Mammary epithelial cell (primary cell): ENCODE measurements at regions of chr1 and their contacts with region 1.

Region 1: DNA sequence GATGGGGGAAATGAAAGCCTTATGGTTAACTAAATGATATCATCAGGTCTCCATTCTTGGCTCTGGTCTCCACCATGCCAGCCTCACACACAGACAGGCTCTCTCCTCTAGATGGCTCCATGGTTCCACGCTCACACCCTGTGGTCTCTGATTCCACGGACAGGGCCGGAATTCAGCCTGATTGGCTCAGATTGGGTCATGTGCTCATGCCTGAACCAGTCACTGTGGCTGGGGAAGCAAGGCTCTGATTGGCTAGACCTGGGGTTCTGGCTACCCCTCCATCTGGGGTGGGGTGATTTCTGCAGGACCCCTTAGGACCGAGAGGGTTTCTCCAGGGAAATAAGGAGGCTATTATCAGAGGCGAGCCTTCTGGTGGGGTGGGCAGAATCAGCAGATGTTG is 277.0 kb downstream of the PTPRU start:
- DNase-seq: peak; percentile 67
- H3K4me3 ChIP-seq: no peak overlapping the region
- H3K27ac ChIP-seq: no peak overlapping the region
- H3K4me1 ChIP-seq: no peaks in the 10 kb centered on the region
- H3K27me3 ChIP-seq: no peaks in the 10 kb centered on the region
- CTCF ChIP-seq: peak; percentile 94 to 96

Region 2: DNA sequence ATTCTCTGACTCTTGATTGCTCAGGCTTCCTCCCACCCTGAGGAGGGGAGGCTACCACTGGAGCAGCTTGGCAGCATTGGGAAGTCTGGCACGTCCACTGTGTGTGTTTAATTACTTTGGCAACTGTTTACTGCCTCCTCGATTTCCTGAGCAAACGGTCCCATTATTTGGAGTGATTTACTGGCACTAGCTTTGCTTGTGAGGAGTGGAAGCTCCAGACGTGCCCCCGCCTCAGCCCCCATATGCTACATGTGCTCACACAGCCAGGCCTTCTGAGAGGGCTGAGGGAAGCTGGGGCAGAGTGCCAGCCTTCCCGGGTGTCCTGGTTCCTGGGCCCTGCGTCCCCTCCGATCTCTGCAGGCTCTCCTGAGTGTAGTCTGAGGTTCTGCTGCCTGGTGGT is 29.2 kb after region 1 on chr1:
- CTCF ChIA-PET with region 1: no interaction called
- dilution Hi-C with region 1: no loop called
- in situ Hi-C with region 1: no loop called
- intact Hi-C with region 1: no loop called
- DNase-seq: no peak
- H3K4me3 ChIP-seq: no peak overlapping the region
- H3K27ac ChIP-seq: no peak overlapping the region
- H3K4me1 ChIP-seq: no peaks in the 10 kb centered on the region
- H3K27me3 ChIP-seq: no peaks in the 10 kb centered on the region
- CTCF ChIP-seq: no peak

Region 3: DNA sequence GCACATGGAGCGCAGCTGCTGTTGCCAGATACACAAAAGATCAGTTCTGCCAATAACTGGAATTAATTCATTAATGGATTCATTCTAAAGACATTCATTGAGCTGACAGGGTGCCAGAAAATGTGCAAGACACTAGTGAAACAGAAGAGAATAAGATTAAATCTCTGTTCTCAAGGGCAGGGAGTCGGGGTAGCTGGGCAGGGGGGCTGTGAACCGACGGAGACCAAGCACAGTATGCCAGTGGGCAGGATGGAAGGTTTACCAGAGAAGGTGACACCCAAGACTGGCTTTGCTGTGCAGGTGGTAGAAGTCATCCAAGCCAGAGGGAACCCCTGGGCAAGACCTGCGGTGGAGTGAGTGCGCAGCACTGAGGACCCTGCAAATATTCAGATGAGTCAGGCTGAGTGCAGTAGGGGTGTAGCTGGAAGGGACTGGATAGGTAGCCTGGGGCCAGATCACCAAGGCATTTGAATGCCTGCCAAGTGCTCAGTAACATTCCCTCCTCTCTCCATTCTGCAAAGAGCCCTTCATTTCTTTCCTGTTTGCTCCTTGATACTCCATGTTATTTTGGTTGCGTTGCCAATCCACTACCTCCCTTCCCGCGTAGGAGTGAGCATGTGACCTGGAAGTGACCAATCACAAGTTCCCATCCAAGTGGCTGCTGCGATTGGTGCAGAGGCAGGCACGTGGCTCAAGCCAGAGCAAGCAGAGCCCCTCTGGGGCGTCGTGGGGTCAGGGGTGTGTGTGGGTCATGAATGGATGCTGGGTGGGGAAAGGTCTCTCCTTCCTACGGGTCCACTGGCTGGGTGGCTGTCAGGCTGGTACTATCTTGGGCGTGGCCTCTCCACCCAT is 136.1 kb after region 1 on chr1:
- CTCF ChIA-PET with region 1: no interaction called
- dilution Hi-C with region 1: no loop called
- in situ Hi-C with region 1: no loop called
- intact Hi-C with region 1: loop called (anchors 5 kb)
- DNase-seq: peak; percentile 71
- H3K4me3 ChIP-seq: no peak overlapping the region
- H3K27ac ChIP-seq: peak overlapping the region; percentile 11
- H3K4me1 ChIP-seq: peaks cover 30% of the 10 kb centered on the region
- H3K27me3 ChIP-seq: no peaks in the 10 kb centered on the region
- CTCF ChIP-seq: no peak

Region 4: GRCh38 chr1:29703596-29704370 is 190.4 kb after region 1 on chr1:
- CTCF ChIA-PET with region 1: no interaction called
- dilution Hi-C with region 1: no loop called
- in situ Hi-C with region 1: loop called in 1 of 2 experiments (anchors 10 kb)
- intact Hi-C with region 1: loop called (anchors 1 kb)
- DNase-seq: peak; percentile 45
- H3K4me3 ChIP-seq: no peak overlapping the region
- H3K27ac ChIP-seq: no peak overlapping the region
- H3K4me1 ChIP-seq: peaks cover 16% of the 10 kb centered on the region
- H3K27me3 ChIP-seq: no peaks in the 10 kb centered on the region
- CTCF ChIP-seq: peak; percentile 91 to 95

Region 5: DNA sequence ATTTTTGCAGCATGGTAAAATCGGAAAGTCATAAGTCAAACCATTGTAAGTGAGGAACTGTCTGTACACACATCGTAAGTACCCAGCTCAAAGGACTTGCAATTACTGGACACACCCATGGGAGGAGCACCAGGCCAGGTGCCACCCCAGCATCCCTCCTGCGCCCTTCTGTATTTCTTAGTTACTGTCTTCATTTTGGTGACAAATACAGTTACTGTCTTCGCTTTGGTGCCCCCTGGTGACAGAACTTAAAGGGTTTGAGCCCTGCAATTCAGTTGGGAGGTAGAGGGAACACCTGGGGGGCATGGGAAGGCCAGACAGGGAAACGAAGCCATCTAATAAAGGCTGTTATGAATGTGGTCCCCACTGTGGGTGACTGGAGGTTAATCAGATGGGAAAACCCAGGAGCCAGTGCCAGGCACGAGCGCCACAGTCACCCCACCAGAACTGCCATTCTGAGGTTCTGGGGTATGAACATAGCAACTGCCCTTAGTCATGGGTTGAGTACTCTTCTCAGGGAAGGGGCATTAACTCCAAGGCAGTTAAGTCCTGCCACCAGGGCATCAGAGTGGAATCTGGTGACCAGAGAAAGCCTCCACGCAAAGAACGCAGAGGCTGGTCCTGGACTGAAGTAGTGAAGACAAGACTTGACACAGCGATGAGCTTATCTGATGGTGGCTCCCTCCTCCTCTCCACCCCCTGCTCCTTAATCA is 335.8 kb after region 1 on chr1:
- CTCF ChIA-PET with region 1: no interaction called
- dilution Hi-C with region 1: no loop called
- in situ Hi-C with region 1: no loop called
- intact Hi-C with region 1: loop called (anchors 1 kb)
- DNase-seq: peak; percentile 41
- H3K4me3 ChIP-seq: no peak overlapping the region
- H3K27ac ChIP-seq: no peak overlapping the region
- H3K4me1 ChIP-seq: no peaks in the 10 kb centered on the region
- H3K27me3 ChIP-seq: peaks cover 2% of the 10 kb centered on the region
- CTCF ChIP-seq: peak; percentile 49 to 65

Region 6: GRCh38 chr1:30085811-30086770 is 572.7 kb after region 1 on chr1:
- CTCF ChIA-PET with region 1: no interaction called
- dilution Hi-C with region 1: loop called (anchors 10 kb)
- in situ Hi-C with region 1: loop called in 1 of 2 experiments (anchors 10 kb)
- intact Hi-C with region 1: loop called (anchors 1 kb)
- DNase-seq: no peak
- H3K4me3 ChIP-seq: no peak overlapping the region
- H3K27ac ChIP-seq: no peak overlapping the region
- H3K4me1 ChIP-seq: peaks cover 14% of the 10 kb centered on the region
- H3K27me3 ChIP-seq: no peaks in the 10 kb centered on the region
- CTCF ChIP-seq: peak; percentile 38 to 73

Region 7: GRCh38 chr1:30111431-30111830 is 598.1 kb after region 1 on chr1:
- CTCF ChIA-PET with region 1: no interaction called
- dilution Hi-C with region 1: no loop called
- in situ Hi-C with region 1: no loop called
- intact Hi-C with region 1: loop called (anchors 1 kb)
- DNase-seq: peak; percentile 16
- H3K4me3 ChIP-seq: no peak overlapping the region
- H3K27ac ChIP-seq: no peak overlapping the region
- H3K4me1 ChIP-seq: no peaks in the 10 kb centered on the region
- H3K27me3 ChIP-seq: no peaks in the 10 kb centered on the region
- CTCF ChIP-seq: peak; percentile 43 to 69

Region 8: GRCh38 chr1:30718636-30719405 is 1205.5 kb after region 1 on chr1:
- CTCF ChIA-PET with region 1: no interaction called
- dilution Hi-C with region 1: no loop called
- in situ Hi-C with region 1: loop called in 1 of 2 experiments (anchors 25 kb)
- intact Hi-C with region 1: no loop called
- DNase-seq: peak; percentile 96
- H3K4me3 ChIP-seq: peak overlapping the region; percentile 65 to 78 (median 76)
- H3K27ac ChIP-seq: peak overlapping the region; percentile 86
- H3K4me1 ChIP-seq: peaks cover 20% of the 10 kb centered on the region
- H3K27me3 ChIP-seq: no peaks in the 10 kb centered on the region
- CTCF ChIP-seq: peak; percentile 69 to 91